PC-9 (cell line): ENCODE measurements at regions of chr4 and their contacts with region 1.

Region 1: GRCh38 chr4:34181311-34181808 is 2063.0 kb downstream of the ARAP2 start:
- DNase-seq: peak; percentile 54 to 98
- H3K4me3 ChIP-seq: no peak overlapping the region; the same call in 1 of the 2 replicates
- H3K27ac ChIP-seq: peak overlapping the region; percentile 83
- H3K4me1 ChIP-seq: peaks cover 41% of the 10 kb centered on the region
- H3K27me3 ChIP-seq: no peaks in the 10 kb centered on the region
- CTCF ChIP-seq: no peak

Region 2: DNA sequence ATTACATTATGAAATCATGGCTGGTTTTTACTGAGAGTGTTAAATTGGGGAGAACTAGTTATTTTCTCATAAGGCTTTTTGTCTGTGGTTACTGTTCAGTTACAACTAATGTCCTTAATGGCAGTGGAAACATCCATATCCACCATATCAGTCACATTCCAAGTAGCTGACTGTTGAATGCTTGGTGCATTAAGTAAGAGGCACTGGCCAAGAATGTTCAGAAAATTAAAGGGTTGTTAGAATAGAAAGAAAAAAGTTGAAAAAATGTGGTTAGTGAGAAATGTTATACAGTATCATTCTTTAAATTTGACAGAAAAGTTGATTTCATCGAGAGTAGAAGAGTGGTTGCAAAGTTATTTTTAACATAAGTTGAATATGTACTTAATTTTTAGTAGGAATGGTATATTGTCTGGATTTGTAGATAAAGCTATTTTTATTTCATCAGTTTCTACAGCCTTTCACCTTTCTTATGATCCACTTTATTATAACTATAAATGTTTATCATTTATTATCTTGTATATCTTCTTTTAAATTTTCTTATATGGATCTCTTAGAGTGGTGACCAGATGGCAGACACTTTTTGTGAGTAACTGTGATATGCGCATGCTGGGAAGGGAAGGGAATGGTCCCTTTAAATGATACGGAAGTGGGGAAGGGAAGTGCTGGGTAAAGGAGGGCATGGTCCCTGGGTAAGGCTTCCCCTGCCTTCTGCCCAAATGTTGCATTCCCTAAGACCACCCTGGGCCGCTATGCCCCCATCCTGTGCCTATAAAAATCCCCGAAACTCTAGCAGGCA is 344.1 kb before region 1 on chr4:
- CTCF ChIA-PET with region 1: no interaction called
- POLR2A ChIA-PET with region 1: no interaction called
- intact Hi-C with region 1: loop called (anchors 1 kb)
- DNase-seq: peak in 1 of 2 experiments; percentile 48
- H3K4me3 ChIP-seq: no peak overlapping the region
- H3K27ac ChIP-seq: no peak overlapping the region
- H3K4me1 ChIP-seq: no peaks in the 10 kb centered on the region
- H3K27me3 ChIP-seq: no peaks in the 10 kb centered on the region
- CTCF ChIP-seq: no peak

Region 3: GRCh38 chr4:33930497-33930896 is 250.9 kb before region 1 on chr4:
- CTCF ChIA-PET with region 1: no interaction called
- POLR2A ChIA-PET with region 1: no interaction called
- intact Hi-C with region 1: no loop called
- DNase-seq: no peak
- H3K4me3 ChIP-seq: no peak overlapping the region
- H3K27ac ChIP-seq: no peak overlapping the region
- H3K4me1 ChIP-seq: no peaks in the 10 kb centered on the region
- H3K27me3 ChIP-seq: no peaks in the 10 kb centered on the region
- CTCF ChIP-seq: no peak

Region 4: GRCh38 chr4:34196375-34196774 is 15.0 kb after region 1 on chr4:
- CTCF ChIA-PET with region 1: no interaction called
- POLR2A ChIA-PET with region 1: no interaction called
- intact Hi-C with region 1: no loop called
- DNase-seq: no peak
- H3K4me3 ChIP-seq: no peak overlapping the region
- H3K27ac ChIP-seq: no peak overlapping the region
- H3K4me1 ChIP-seq: peaks cover 9% of the 10 kb centered on the region; the same call in 1 of the 2 replicates
- H3K27me3 ChIP-seq: no peaks in the 10 kb centered on the region
- CTCF ChIP-seq: no peak

Region 5: GRCh38 chr4:34615315-34615714 is 434.0 kb after region 1 on chr4:
- CTCF ChIA-PET with region 1: no interaction called
- POLR2A ChIA-PET with region 1: no interaction called
- intact Hi-C with region 1: no loop called
- DNase-seq: no peak
- H3K4me3 ChIP-seq: no peak overlapping the region
- H3K27ac ChIP-seq: no peak overlapping the region
- H3K4me1 ChIP-seq: no peaks in the 10 kb centered on the region
- H3K27me3 ChIP-seq: no peaks in the 10 kb centered on the region
- CTCF ChIP-seq: no peak

Region 6: DNA sequence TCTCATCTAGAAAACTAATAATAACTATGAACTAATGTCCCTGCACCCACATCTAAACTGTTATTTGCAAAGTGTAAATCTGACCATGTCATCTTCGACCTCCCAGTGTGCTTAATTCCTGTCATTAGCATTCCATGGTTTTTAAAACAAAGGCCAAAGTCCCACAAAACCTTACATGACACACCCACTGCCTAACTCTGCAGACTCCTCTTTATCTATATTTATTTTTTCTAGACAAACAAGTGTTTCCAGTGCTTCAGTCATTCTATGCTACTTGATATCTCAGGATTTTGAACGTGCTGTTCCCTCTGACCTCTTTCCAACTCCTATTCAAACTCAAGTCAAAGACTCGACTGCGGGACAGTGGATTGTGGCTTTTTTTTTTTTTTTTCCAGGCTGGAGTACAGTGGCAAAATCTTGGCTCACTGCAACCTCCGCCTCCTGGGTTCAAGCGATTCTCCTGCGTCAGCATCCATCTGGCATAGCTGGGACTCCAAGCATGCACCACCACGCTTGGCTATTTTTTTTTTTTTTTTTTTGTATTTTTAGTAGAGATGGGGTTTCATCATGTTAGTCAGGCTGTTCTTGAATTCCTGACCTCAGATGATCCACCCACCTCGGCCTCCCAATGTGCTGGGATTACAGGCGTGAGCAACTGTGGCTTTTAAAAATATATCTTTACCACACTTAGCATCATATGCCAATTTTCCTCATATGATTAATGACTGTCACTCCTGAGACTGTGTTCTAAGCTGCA is 552.0 kb after region 1 on chr4:
- CTCF ChIA-PET with region 1: no interaction called
- POLR2A ChIA-PET with region 1: no interaction called
- intact Hi-C with region 1: loop called (anchors 5 kb)
- DNase-seq: peak; percentile 7 to 51
- H3K4me3 ChIP-seq: no peak overlapping the region
- H3K27ac ChIP-seq: no peak overlapping the region
- H3K4me1 ChIP-seq: peaks cover 6% of the 10 kb centered on the region; the same call in 1 of the 2 replicates
- H3K27me3 ChIP-seq: no peaks in the 10 kb centered on the region
- CTCF ChIP-seq: no peak

Region 7: DNA sequence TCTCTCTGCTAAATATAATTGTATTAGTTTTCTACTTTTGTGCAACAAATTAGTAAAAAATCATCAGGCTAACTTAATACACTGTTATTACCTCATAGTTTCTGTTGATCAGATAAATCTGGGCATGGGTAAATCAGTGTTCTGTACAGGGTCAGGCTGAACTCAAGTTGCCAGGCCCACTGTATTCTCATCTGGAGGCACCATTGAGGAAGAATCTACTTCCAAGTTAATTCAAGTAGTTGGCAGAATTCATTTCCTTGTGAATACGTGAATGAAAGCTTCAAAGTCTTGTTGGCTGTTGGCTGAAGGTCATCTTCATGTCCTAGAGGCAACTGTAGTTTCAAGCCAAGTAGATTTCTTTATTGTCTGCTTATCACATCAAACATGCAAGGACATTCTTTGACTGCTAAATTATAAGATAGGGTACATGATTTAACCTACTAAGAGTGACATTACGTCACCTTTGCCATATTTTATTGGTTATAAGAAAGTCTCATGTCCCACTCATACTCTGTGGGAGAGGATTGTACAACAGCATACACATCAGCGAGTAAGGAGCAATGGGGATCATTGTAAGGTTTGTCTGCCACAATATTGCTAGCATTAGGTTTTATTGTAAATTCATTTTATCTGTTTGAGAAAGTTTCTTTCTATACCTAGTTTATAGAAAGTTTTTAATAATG is 843.9 kb after region 1 on chr4:
- CTCF ChIA-PET with region 1: no interaction called
- POLR2A ChIA-PET with region 1: no interaction called
- intact Hi-C with region 1: loop called (anchors 5 kb)
- DNase-seq: no peak
- H3K4me3 ChIP-seq: no peak overlapping the region
- H3K27ac ChIP-seq: no peak overlapping the region
- H3K4me1 ChIP-seq: no peaks in the 10 kb centered on the region
- H3K27me3 ChIP-seq: no peaks in the 10 kb centered on the region
- CTCF ChIP-seq: no peak